ENCODE measurements at regions of chr11 and their contacts with region 1.

Region 1: DNA sequence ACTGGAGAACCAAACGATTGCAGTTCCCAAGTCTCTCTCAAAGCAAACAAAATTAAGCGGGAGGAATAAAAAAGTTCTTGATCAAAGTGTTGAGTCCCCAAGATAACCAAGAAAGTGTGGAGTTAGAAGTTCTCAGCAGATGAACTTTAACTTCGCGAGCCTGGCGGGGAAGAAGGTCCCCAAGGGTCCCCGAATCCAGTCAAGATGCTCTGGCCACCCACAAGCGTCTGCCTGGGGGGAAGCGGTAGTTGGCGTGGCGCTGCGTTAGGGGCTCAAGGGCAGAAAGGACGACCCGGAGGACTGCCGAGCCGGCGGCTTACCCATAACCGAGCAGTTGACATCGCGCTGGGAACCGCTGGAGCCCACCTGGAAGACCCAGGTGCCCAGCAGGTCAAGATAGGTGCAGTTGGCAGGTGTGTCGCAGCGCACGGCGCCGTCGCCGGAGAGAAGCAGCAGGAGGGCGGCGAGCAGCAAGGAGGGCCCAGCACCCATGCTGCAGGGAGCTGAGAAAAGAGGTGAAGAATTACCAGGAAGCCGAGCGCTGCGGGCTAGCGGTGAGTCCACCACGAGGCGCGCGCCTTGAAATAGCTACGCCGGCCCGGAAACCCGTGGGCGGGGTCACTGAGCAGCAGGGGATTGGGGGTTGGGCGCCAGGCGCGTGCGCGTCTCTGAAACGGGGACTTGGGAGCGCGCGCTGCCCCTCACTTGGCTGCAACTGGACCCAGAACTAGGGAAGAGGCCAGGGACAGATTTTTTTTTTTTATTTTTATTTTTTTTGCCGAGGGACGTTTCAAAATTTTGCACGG is at the start of gene CTSC:
- H3K4me3 Mint-ChIP-seq: peak within 1 kb of the TSS; percentile 81
- H3K27ac Mint-ChIP-seq: peak within 1 kb of the TSS; percentile 90
- H3K4me1 Mint-ChIP-seq: peaks cover 36% of the 10 kb centered on the region
- H3K27me3 Mint-ChIP-seq: no peaks in the 10 kb centered on the region

Region 2: GRCh38 chr11:88357323-88358039 is 20.1 kb after region 1 on chr11:
- intact Hi-C with region 1: loop called (anchors 1 kb)
- H3K4me3 Mint-ChIP-seq: no peak overlapping the region
- H3K27ac Mint-ChIP-seq: peak overlapping the region; percentile 67
- H3K4me1 Mint-ChIP-seq: peaks cover 44% of the 10 kb centered on the region
- H3K27me3 Mint-ChIP-seq: no peaks in the 10 kb centered on the region

Region 3: DNA sequence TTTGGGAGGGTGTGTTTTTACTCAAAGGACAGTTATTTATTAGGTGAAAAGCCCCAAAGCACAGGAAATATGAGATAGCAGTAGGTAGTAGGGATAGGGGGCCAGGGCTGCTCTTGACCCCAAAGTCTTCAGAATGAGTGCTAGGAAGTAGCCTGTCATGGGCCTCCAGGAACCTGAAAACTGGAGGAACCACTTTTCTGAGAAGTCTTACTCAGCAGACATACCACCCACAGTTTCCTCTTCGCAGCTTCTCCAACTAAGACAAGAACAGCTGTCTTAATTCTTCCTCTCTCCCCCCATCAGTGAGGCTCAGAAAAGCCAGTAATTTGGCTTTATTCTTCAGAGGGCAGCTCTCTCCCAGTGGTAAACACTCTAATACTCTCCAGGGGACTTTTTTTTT is 84.1 kb after region 1 on chr11:
- intact Hi-C with region 1: loop called (anchors 1 kb)
- H3K4me3 Mint-ChIP-seq: peak overlapping the region; percentile 70
- H3K27ac Mint-ChIP-seq: peak overlapping the region; percentile 97
- H3K4me1 Mint-ChIP-seq: peaks cover 74% of the 10 kb centered on the region
- H3K27me3 Mint-ChIP-seq: no peaks in the 10 kb centered on the region

Region 4: GRCh38 chr11:88435189-88435814 is 97.9 kb after region 1 on chr11:
- intact Hi-C with region 1: loop called (anchors 5 kb)
- H3K4me3 Mint-ChIP-seq: peak overlapping the region; percentile 27
- H3K27ac Mint-ChIP-seq: peak overlapping the region; percentile 86
- H3K4me1 Mint-ChIP-seq: peaks cover 86% of the 10 kb centered on the region
- H3K27me3 Mint-ChIP-seq: no peaks in the 10 kb centered on the region

Measured in dendritic cell treated with granulocyte-macrophage colony-stimulating factor and Interleukin-4, amounts not matched to agents 40 ng/mL and 50 ng/mL, for 4 days (primary cell).